Posterior vena cava (tissue), 2 donors: ENCODE measurements at regions of chr5 and their contacts with region 1.

Region 1: GRCh38 chr5:99272576-99272975 is 343.8 kb upstream of the CHD1 start:
- DNase-seq: no peak

Region 2: DNA sequence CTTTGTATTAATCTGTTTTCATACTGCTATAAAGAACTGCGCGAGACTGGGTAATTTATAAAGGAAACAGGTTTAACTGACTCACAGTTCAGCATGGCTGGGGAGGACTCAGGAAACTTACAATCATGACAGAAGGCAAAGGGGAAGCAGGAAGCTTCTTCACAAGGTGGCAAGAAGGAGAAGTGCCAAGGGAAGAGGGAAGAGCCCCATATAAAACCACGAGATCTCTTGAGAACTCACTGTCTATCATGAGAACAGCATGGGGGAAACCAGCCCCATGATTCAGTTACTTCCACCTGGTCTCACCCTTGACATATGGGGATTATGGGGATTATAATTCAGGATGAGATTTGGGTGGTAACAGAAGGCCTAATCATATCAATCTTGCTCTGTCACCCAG is 282.8 kb before region 1 on chr5:
- intact Hi-C with region 1: no loop called
- DNase-seq: no peak

Region 3: DNA sequence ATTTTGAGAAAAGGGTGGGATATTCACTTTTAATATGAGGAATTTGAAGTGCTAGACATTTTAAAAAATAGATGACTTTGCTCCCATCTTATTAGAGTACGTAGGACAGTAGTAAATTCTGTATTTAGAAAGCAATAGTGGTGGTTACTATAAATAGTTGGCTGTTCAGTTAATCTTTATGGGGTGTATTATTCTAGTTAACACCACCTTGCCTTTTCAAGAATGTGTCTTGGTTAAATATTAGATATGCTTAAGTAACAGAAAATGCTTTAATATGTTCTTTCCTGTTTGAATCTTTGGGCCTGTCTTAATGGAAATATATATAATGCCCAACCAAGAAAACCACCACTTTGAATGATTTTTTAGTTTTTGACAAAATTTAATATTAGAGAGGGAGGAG is 653.9 kb after region 1 on chr5:
- intact Hi-C with region 1: loop called in 1 of 2 experiments (anchors 5 kb)
- DNase-seq: no peak

Region 4: GRCh38 chr5:100175346-100175745 is 902.8 kb after region 1 on chr5:
- intact Hi-C with region 1: no loop called
- DNase-seq: no peak